ENCODE measurements at regions of chr16 and their contacts with region 1.

Region 1: DNA sequence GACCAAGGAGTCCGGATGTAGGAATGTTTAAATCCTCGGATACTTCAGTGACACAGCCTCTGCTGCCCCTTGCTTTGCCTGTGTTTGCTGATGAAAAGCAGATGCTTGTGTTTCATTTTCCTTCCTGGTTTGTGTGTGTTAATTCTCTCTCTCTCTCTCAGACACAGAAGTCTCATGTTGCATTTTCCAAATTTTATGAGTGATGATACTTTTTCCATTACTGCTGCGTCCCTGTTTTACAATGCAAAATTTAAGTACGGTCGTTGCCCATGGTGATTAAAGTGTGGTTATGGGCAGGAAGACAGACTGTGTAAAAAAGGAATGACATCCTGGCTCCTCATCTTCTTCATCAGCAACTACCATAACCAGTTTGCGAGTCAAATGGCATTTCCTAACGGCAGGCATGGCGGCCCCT is 5.7 kb downstream of the RMI2 start:
- DNase-seq: no peak
- ATAC-seq: no peak
- H3K4me3 Mint-ChIP-seq: no peak overlapping the region
- H3K27ac Mint-ChIP-seq: no peak overlapping the region
- H3K4me1 Mint-ChIP-seq: peaks cover 65% of the 10 kb centered on the region
- H3K27me3 Mint-ChIP-seq: peaks cover 2% of the 10 kb centered on the region

Region 2: DNA sequence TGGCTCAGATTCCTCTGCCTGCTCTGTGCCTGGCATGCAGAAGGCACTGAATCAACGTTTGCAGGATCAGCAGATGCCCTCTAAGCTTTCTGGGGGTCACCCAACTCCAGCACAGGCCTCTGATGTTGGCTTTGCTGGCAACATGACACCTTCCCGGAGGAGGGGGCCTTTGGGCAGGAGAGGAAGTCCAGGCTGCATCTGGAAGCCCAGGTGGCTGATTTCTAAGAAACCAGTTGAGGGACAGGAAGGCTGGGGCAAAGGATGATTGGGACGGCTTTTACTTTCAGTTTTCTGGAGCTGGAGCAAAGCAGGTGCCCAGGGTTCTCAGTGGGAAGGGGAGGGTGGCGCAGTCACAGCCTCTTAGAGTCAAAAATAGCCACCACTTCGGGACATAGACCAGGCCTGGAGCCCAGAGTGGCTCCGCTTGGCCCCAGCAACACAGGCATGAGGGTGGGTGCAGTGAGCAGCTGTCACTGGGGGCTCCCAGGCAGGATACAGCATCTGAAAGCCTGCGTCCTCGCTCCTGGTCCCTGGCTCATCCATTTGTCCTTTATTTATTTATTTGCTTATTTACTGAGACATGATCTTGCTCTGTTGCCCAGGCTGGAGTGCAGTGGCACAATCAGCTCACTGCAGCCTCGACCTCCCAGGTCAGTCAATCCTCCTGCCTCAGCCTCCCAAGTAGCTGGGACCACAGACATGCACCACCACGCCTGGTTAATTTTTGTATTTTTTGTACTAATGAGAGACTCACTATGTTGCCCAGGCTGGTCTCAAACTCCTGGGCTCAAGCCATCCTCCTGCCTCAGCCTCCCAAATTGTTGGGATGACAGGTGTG is 110.1 kb before region 1 on chr16:
- CTCF ChIA-PET with region 1: no interaction called
- DNase-seq: peak; percentile 59
- ATAC-seq: peak; percentile 60
- H3K4me3 Mint-ChIP-seq: peak overlapping the region; percentile 11
- H3K27ac Mint-ChIP-seq: no peak overlapping the region
- H3K4me1 Mint-ChIP-seq: peaks cover 26% of the 10 kb centered on the region
- H3K27me3 Mint-ChIP-seq: no peaks in the 10 kb centered on the region

Region 3: DNA sequence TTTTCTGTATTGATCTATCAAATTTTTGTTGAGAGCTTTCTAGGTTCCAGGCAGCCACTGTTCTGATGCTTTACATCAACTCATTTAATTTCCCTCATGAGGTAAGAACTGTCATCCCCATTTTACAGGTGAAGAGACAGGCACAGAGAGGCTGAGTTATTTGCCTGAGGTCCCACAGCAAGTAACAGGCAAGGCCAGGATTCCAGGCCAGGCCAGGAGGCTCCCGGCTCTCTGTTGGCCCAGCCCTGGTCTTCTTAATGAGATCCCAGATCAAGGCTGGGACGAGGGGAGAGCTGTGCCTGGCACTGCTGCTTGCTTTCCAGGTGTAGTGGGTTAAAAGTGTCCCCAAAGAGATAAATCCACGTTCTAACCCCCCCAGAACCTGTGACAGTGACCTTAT is 28.1 kb before region 1 on chr16:
- CTCF ChIA-PET with region 1: no interaction called
- DNase-seq: no peak
- ATAC-seq: no peak
- H3K4me3 Mint-ChIP-seq: no peak overlapping the region
- H3K27ac Mint-ChIP-seq: no peak overlapping the region
- H3K4me1 Mint-ChIP-seq: peaks cover 31% of the 10 kb centered on the region
- H3K27me3 Mint-ChIP-seq: no peaks in the 10 kb centered on the region

Region 4: GRCh38 chr16:11370084-11370931 is 19.4 kb after region 1 on chr16:
- CTCF ChIA-PET with region 1: interaction called, 13 read pairs
- DNase-seq: no peak
- ATAC-seq: no peak
- H3K4me3 Mint-ChIP-seq: no peak overlapping the region
- H3K27ac Mint-ChIP-seq: no peak overlapping the region
- H3K4me1 Mint-ChIP-seq: peaks cover 6% of the 10 kb centered on the region
- H3K27me3 Mint-ChIP-seq: peaks cover 21% of the 10 kb centered on the region

Region 5: DNA sequence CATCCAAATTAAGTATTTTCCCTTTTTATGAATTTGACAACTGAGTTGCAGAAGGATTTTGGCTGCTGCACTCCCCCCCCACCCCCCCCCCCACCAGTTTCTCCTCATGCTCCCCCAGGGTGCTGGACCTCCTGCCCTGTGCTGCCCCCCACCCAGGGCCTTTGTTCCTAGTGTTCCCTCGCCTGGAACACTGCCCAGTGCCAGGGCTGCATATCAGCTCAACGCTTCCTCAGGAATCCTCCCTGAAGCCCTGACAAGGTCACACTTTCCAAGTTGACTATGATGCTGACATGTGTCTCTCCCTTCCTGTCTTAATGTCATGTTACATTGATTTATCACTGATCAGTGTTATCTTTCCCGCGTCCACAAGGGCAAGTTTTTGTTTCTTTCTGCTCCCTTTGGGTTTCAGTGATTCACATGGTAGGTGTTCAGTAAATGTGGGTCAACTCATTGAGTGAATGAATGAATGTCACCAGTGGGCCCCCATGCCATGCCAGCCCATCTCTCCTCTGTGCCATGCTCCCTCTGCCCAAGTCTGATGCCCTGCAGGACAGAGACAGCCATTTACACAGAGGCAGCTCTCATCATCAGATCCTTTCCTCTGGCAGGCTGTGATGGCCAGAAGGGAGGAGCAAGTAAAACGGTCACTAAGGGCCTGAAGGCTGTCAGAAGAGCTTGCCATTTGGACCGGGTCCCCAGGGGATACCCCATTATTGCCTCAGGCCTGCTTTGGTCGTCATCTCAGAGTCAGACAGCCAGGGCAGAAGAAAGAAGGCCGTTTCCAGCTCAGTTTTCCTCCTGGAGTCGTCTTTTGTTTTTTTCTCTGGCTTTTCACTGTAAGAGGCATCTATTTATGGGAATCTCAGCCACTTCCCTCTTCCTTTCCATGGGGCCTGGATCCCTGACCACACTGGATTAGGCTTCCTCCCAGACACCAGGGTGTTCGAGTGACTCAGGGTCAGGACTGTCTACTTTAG is 1011.8 kb after region 1 on chr16:
- CTCF ChIA-PET with region 1: no interaction called
- DNase-seq: no peak
- ATAC-seq: no peak
- H3K4me3 Mint-ChIP-seq: no peak overlapping the region
- H3K27ac Mint-ChIP-seq: no peak overlapping the region
- H3K4me1 Mint-ChIP-seq: no peaks in the 10 kb centered on the region
- H3K27me3 Mint-ChIP-seq: no peaks in the 10 kb centered on the region

Measured in activated CD8-positive, alpha-beta memory T cell treated with anti-CD3 and anti-CD28 coated beads, Interleukin-2, amount 10 ng/mL, durations not matched to agents 7 days and 5 days (primary cell).